ENCODE measurements at regions of chr5 and their contacts with region 1.

Region 1: DNA sequence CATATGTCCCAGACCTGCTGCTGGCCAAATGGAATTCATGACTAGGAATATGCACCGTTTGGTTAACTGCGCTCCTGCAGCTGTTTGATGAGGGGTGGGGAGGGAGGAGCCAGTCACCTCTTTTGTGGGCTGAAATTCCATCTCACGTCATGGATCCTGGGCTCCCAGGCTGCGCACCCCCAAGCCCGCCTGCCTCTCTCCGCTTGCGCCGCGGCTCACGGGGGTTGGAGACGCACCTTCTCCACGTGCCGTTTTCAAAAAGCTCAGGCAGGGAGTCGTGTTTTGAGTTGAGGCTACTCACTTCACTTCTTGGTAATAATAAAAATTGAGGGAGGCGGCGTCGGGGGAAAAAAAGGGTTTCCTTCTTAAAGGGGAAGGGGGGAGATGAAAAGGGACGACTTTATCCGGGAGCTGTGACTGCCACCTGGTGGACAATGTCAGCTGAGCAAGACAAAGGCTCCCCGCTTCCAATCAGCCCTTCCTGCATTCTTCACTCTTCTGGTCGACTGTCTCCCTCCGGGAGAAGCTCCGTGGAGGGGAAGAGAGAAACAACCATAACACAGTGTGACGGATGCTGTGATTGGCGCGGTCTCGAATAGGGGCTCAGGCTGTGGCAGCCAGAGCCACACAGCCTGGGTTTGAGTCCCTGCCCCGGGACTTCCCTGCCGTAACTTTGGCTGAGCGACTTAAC is 15.9 kb upstream of the C5orf47 start:
- DNase-seq: peak; percentile 61 to 88
- ATAC-seq: peak; percentile 81 to 92 (median 88)
- H3K4me3 ChIP-seq: peak overlapping the region; percentile 10
- H3K4me3 Mint-ChIP-seq: peak overlapping the region; percentile 77
- H3K27ac ChIP-seq: no peak overlapping the region
- H3K27ac Mint-ChIP-seq: peak overlapping the region in 1 of 2 donors; percentile 31
- H3K4me1 ChIP-seq: peaks cover 12% of the 10 kb centered on the region
- H3K4me1 Mint-ChIP-seq: peaks cover 8 to 13% of the 10 kb centered on the region in 2 donors
- H3K27me3 ChIP-seq: no peaks in the 10 kb centered on the region
- H3K27me3 Mint-ChIP-seq: peaks cover 30 to 39% of the 10 kb centered on the region in 2 donors
- CTCF ChIP-seq: peak; percentile 76

Region 2: GRCh38 chr5:173293817-173294672 is 679.0 kb before region 1 on chr5:
- intact Hi-C with region 1: loop called (anchors 1 kb)
- DNase-seq: peak; percentile 44 to 76
- ATAC-seq: peak; percentile 58 to 80 (median 68)
- H3K4me3 ChIP-seq: no peak overlapping the region
- H3K4me3 Mint-ChIP-seq: peak overlapping the region; percentile 41
- H3K27ac ChIP-seq: no peak overlapping the region
- H3K27ac Mint-ChIP-seq: no peak overlapping the region
- H3K4me1 ChIP-seq: peaks cover 11% of the 10 kb centered on the region
- H3K4me1 Mint-ChIP-seq: peaks cover 8 to 13% of the 10 kb centered on the region in 2 donors
- H3K27me3 ChIP-seq: peaks cover 3% of the 10 kb centered on the region
- H3K27me3 Mint-ChIP-seq: peaks cover 30 to 44% of the 10 kb centered on the region in 2 donors
- CTCF ChIP-seq: peak; percentile 77

Region 3: GRCh38 chr5:173895401-173896165 is 77.5 kb before region 1 on chr5:
- intact Hi-C with region 1: loop called (anchors 2 kb)
- DNase-seq: no peak
- ATAC-seq: no peak
- H3K4me3 ChIP-seq: no peak overlapping the region
- H3K4me3 Mint-ChIP-seq: no peak overlapping the region
- H3K27ac ChIP-seq: no peak overlapping the region
- H3K27ac Mint-ChIP-seq: no peak overlapping the region
- H3K4me1 ChIP-seq: peaks cover 7% of the 10 kb centered on the region
- H3K4me1 Mint-ChIP-seq: peaks cover 46 to 52% of the 10 kb centered on the region in 2 donors
- H3K27me3 ChIP-seq: no peaks in the 10 kb centered on the region
- H3K27me3 Mint-ChIP-seq: no peaks in the 10 kb centered on the region
- CTCF ChIP-seq: no peak

Region 4: DNA sequence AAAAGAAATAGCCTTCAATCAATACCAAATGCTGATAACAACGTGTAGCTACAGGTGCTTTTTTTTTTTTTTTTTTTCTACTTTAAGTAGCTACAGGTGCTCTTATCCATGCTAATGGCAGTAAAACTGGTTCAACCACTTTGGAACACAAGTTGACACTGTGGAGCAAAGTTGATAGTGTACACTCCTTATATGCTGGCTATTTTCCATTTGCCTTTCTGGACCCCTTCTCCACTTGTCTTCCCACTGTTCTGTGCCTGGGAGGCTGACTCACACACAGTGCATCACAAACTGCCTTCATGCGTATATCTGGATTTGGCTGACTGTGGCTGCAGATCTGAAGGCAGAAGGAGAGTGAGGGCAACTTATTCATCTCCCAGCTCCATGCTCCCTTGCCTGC is 999.2 kb after region 1 on chr5:
- intact Hi-C with region 1: no loop called
- DNase-seq: no peak
- ATAC-seq: peak in 1 of 3 donors; percentile 44
- H3K4me3 ChIP-seq: no peak overlapping the region
- H3K4me3 Mint-ChIP-seq: no peak overlapping the region
- H3K27ac ChIP-seq: no peak overlapping the region
- H3K27ac Mint-ChIP-seq: no peak overlapping the region
- H3K4me1 ChIP-seq: no peaks in the 10 kb centered on the region
- H3K4me1 Mint-ChIP-seq: no peaks in the 10 kb centered on the region
- H3K27me3 ChIP-seq: peaks cover 3% of the 10 kb centered on the region
- H3K27me3 Mint-ChIP-seq: peaks cover 0 to 3% of the 10 kb centered on the region in 2 donors
- CTCF ChIP-seq: no peak